Heart right ventricle (tissue), 16 donors: ENCODE measurements at regions of chr1 and their contacts with region 1.

Region 1: GRCh38 chr1:111222308-111223125 is 5.0 kb upstream of the CHI3L2 start:
- DNase-seq: peak; percentile 66 to 79
- ATAC-seq: peak; percentile 69 to 90 (median 82)
- H3K4me3 ChIP-seq: peak overlapping the region in 1 of 10 donors; percentile 9
- H3K27ac ChIP-seq: peak overlapping the region in 1 of 10 donors; percentile 81
- H3K4me1 ChIP-seq: peaks cover 0 to 68% (median 4%) of the 10 kb centered on the region in 9 donors
- H3K27me3 ChIP-seq: no peaks in the 10 kb centered on the region
- CTCF ChIP-seq: peak; percentile 76 to 94 (median 90)

Region 2: DNA sequence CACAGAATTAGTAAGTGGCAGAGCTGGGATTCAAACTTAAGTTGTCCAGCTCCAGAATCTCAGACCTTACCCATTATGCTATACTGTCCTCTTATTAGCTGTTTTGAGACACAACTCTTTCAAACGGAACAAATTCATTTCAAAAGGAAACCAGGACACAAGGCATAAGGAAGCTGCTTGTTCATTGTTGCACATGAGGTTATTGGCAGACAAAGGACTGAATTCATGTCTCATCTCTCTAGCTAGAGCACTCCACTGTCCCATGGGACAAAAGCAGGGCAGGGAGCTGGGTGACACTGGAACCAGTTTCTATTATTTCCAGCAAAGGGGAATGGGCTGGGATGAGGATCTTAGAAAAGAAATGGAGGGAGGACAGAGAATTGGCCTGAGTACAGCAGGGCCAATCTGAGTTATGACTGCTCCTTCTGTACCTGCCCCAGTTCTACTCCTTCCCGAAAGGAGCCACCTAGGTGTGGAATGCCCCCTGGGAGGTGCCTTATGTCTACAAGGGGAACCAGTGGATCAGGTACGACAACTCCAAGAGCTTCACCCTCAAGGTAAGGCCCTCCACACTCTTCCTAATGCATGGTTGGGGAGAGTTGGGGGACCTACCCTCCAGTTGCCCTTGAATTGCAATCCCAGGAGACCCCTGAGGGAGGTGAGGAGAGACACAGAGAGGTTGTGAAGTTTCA is 31.5 kb after region 1 on chr1:
- intact Hi-C with region 1: no loop called
- DNase-seq: no peak
- ATAC-seq: no peak
- H3K4me3 ChIP-seq: no peak overlapping the region
- H3K27ac ChIP-seq: no peak overlapping the region
- H3K4me1 ChIP-seq: no peaks in the 10 kb centered on the region
- H3K27me3 ChIP-seq: peaks cover 0 to 4% (median 0%) of the 10 kb centered on the region in 7 donors
- CTCF ChIP-seq: no peak

Region 3: GRCh38 chr1:111320106-111320879 is 97.8 kb after region 1 on chr1:
- intact Hi-C with region 1: loop called in 1 of 10 experiments (anchors 10 kb)
- DNase-seq: no peak
- ATAC-seq: no peak
- H3K4me3 ChIP-seq: no peak overlapping the region
- H3K27ac ChIP-seq: no peak overlapping the region
- H3K4me1 ChIP-seq: no peaks in the 10 kb centered on the region
- H3K27me3 ChIP-seq: peaks cover 0 to 7% (median 0%) of the 10 kb centered on the region in 7 donors
- CTCF ChIP-seq: no peak

Region 4: DNA sequence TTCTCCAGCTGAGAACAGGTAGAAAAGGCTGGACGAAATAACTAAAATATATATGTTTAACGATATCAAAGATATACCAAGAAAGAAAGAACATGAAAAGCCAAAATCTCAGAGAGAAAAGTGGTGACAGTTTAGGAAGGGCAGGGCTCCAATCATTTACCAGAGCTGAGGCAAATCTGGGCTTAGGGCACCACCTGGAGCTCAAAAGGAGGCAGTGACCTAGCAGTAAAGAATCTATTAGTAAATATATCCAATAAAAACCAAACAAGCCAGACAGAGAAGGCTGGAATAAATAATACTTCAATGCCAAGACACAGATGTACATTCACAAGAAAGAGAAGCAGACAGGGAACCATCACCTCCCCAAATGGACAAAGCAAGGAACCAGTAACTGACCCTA is 111.7 kb after region 1 on chr1:
- intact Hi-C with region 1: loop called in 9 of 10 experiments (anchors 1 to 10 kb)
- DNase-seq: no peak
- ATAC-seq: peak in 2 of 8 donors; percentile 58 to 71
- H3K4me3 ChIP-seq: no peak overlapping the region
- H3K27ac ChIP-seq: no peak overlapping the region
- H3K4me1 ChIP-seq: no peaks in the 10 kb centered on the region
- H3K27me3 ChIP-seq: peaks cover 0 to 3% (median 0%) of the 10 kb centered on the region in 7 donors
- CTCF ChIP-seq: peak in 8 of 9 donors; percentile 24 to 62 (median 50)

Region 5: DNA sequence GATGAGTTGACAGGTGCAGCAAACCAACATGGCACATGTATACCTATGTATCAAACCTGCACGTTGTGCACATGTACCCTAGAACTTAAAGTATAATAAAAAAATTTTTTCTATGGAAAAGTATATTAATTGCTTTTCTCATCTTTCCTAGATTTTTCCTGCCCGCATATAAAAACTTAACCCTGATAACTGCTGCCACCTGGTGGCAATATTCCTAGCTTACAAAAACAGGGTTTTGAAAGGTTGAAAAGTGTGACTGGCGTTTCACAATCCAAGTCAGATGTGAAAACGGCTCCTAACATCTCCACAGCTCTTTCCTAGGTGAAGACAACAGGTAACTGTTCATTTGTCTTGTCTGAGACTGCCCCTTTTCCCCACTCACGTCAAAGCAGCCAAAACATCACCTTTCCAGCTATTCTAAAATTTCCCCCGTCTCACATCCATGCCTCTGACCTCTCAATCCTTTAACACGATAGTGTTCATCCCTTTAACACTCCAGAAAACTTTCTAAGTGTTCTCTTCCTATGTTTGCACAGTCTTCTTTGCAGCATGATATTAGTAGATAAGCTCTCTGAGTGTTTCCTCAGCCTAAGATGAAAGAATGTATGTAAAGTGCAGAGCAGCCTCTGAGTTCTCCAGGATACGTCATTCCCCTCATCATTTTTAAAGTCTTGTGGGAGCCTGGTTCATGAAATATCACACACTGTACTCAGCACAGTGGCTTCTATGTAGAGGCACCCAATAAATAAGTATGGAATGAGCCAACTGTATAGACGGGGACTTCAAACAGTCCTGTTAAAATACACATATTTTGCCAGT is 177.5 kb after region 1 on chr1:
- intact Hi-C with region 1: loop called (anchors 1 to 5 kb)
- DNase-seq: peak in 1 of 2 donors; percentile 47
- ATAC-seq: no peak
- H3K4me3 ChIP-seq: no peak overlapping the region
- H3K27ac ChIP-seq: no peak overlapping the region
- H3K4me1 ChIP-seq: no peaks in the 10 kb centered on the region
- H3K27me3 ChIP-seq: peaks cover 0 to 12% (median 0%) of the 10 kb centered on the region in 7 donors
- CTCF ChIP-seq: peak; percentile 39 to 79 (median 71)

Region 6: GRCh38 chr1:111769517-111770146 is 547.1 kb after region 1 on chr1:
- intact Hi-C with region 1: loop called in 3 of 10 experiments (anchors 5 to 10 kb)
- DNase-seq: peak in 1 of 2 donors; percentile 24
- ATAC-seq: peak in 4 of 8 donors; percentile 41 to 71 (median 48)
- H3K4me3 ChIP-seq: no peak overlapping the region
- H3K27ac ChIP-seq: no peak overlapping the region
- H3K4me1 ChIP-seq: peaks cover 0 to 7% (median 0%) of the 10 kb centered on the region in 9 donors
- H3K27me3 ChIP-seq: no peaks in the 10 kb centered on the region
- CTCF ChIP-seq: peak; percentile 67 to 88 (median 81)